Activated B cell treated with CpG ODN at 0.5 μM for 24 hours (primary cell): ENCODE measurements at regions of chr16 and their contacts with region 1.

Region 1: DNA sequence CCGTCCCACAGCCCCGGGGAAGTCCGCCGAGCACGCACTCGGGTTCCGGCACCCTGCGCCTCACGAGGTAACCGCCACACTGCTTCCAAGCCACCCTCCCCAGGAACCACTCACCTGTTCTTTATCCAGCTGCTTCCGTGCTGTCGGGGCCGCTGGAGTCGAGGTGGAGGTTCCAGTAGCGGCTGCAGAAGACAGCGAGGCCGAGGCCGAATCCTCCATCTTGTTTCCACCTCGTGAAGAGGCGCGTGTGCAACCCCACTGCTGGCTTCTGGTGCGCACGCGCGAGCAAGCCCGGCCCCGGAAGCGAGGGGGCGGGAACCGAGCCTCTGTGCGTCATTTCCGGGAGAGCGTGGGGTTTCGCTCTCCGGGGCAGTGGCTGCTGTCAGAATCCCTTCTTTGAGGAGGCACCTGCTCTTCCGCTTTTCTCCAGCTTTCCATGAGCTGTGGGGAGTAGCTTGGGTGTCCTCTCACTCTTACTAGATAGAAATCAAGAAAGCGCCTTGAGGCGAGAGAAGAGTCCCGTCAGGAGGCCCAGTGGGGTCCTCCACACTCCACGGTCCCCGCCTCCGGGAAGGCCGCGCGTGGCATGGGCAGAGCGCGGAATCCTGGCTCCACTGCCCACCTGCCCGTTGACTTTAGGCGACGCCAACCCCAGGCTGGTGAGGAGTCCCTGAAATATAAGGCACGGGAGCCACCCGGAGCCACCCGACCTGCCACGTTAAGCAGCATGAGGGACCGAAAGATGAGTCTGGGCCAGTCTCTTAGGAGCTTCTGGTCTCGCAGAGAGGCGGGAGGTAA is at the start of gene RSL1D1:
- DNase-seq: peak; percentile 98
- ATAC-seq: peak; percentile 78
- H3K4me3 Mint-ChIP-seq: peak within 1 kb of the TSS; percentile 98
- H3K27ac Mint-ChIP-seq: peak within 1 kb of the TSS; percentile 91
- H3K4me1 Mint-ChIP-seq: peaks cover 51% of the 10 kb centered on the region
- H3K27me3 Mint-ChIP-seq: no peaks in the 10 kb centered on the region
- CTCF ChIP-seq: no peak
- total RNA-seq, gene RSL1D1: 224 and 265 TPM in 2 replicates

Region 2: GRCh38 chr16:10752843-10753523 is 1098.5 kb before region 1 on chr16:
- CTCF ChIA-PET with region 1: no interaction called
- POLR2A ChIA-PET with region 1: no interaction called
- intact Hi-C with region 1: no loop called
- DNase-seq: peak; percentile 53
- ATAC-seq: peak; percentile 86
- H3K4me3 Mint-ChIP-seq: peak overlapping the region; percentile 63
- H3K27ac Mint-ChIP-seq: peak overlapping the region; percentile 77
- H3K4me1 Mint-ChIP-seq: peaks cover 61% of the 10 kb centered on the region
- H3K27me3 Mint-ChIP-seq: no peaks in the 10 kb centered on the region
- CTCF ChIP-seq: no peak

Region 3: DNA sequence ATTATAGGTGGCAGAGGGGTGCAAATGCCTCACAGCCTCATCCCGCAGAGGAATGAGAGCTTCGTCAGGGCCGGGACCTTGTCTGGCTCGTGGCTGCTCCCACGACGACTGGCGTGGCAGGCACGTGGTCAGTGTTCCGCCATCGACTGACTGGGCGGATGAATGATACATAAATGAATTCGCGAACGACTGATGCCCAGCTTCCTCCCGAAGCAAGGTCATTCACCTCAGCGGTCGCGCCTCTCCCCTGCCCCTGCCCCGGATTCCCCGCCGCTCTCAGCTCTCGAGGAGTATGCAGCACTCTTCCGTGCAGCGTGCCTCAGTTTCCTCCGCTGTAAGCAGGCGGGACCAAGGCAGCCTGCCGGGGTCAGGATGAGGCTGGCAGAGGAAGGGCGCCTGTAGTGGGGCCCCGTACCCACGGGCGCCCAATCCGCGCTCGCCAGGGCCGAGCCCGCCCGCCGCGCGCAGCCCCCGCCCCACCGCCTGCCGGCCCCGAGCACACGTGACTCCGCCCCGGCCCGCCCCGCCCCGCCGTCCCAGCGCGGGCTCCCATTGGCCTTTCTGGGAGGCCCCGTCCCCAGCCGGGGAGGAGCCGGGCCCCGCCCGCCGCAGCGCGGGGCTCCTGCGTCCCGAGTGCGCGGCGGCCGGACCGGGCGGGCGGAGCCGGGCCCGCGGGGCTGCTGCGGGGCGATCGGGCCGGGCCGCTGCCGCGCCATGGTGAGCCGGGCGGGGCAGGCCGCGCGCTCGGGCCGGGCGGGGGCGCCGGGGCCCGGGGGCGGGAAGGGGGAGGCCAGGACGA is 183.5 kb before region 1 on chr16 and contains the start of gene SNN:
- CTCF ChIA-PET with region 1: no interaction called
- POLR2A ChIA-PET with region 1: no interaction called
- intact Hi-C with region 1: loop called (anchors 5 kb)
- DNase-seq: peak; percentile 86
- ATAC-seq: peak; percentile 79
- H3K4me3 Mint-ChIP-seq: peak within 1 kb of the TSS; percentile 90
- H3K27ac Mint-ChIP-seq: peak within 1 kb of the TSS; percentile 89
- H3K4me1 Mint-ChIP-seq: peaks cover 72% of the 10 kb centered on the region
- H3K27me3 Mint-ChIP-seq: no peaks in the 10 kb centered on the region
- CTCF ChIP-seq: no peak
- total RNA-seq, gene SNN: 31.9 and 32.1 TPM in 2 replicates

Region 4: DNA sequence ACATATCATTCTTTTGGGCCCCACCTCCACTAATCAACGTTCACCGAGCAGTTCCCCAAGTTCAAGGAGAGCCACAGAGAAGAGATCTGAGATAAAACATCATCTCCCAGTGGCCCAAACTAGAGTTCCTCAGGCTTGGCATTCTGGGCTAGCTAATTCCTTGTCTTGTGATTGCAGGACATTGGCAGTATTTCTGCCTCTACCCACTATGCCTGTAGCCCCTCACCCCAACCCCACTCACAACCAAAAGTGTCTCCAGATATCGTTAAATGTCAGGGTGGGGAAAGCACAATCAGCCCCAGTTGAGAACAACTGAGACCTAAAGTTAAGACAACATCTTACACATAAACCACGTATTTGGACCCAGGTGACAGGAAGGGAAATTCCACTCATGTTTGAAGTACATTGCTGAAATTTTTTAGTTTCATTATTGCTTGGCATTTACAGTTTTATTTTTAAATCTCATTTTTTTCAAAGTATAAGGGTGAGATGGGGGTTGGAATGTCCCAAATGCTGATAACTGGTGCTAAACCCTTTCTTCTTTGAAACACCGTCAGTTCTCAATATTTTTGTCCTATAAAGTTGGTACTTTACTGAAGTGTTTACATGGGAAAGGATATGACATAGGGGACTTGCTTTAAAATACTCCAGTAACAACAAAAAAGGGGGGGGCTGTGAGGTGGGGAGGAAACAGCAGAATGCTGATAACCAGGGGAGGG is 68.0 kb before region 1 on chr16:
- CTCF ChIA-PET with region 1: no interaction called
- POLR2A ChIA-PET with region 1: interaction called, 3 read pairs
- intact Hi-C with region 1: loop called (anchors 1 kb)
- DNase-seq: peak; percentile 32
- ATAC-seq: peak; percentile 76
- H3K4me3 Mint-ChIP-seq: peak overlapping the region; percentile 80
- H3K27ac Mint-ChIP-seq: peak overlapping the region; percentile 98
- H3K4me1 Mint-ChIP-seq: peaks cover 73% of the 10 kb centered on the region
- H3K27me3 Mint-ChIP-seq: no peaks in the 10 kb centered on the region
- CTCF ChIP-seq: no peak

Region 5: DNA sequence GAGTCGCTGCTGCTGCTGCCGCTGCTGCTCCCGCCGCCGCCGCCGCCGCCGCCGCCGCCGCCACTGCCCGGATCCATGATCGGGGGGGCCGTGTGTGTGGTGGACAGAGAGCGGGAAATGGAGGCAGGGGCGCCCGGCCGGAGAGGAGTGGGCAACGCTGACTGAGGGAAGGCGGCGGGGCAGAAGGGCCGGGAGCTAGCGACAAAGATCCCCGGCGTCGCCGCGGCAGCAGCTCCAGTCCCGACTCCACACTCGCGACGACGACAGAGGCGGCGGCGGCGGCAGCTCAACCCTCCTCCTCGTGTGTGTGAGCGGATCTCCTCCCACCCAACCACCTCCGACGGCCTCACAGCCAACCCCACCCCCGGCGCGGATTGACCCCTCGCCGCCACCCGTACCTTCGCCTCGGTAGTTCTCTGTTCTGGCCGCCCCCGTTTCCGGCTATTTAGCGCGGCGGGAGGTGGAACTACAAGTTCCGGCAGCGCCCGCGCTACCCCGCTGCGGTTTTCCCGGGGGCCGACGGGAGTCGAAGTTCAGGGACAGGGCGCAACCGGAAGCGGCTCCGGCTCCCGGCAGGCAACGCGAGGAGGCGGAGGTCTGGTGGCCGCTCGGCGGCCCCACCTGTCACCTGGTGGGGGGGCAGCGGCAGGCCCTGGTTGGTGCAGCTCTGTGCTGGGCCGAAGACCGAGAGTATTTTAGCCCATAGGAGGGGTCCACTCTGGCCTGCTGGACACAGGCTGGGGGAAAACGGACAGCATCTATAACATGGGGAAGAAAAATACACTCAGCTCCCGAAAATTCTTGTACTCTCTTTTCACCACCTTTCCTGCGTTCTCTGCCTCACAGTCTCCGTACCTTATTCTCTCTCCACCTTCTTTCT is 64.4 kb after region 1 on chr16 and contains the start of gene GSPT1:
- CTCF ChIA-PET with region 1: no interaction called
- POLR2A ChIA-PET with region 1: interaction called, 7 read pairs
- intact Hi-C with region 1: loop called (anchors 1 kb)
- DNase-seq: peak; percentile 98
- ATAC-seq: peak; percentile 93
- H3K4me3 Mint-ChIP-seq: peak within 1 kb of the TSS; percentile 89
- H3K27ac Mint-ChIP-seq: peak within 1 kb of the TSS; percentile 89
- H3K4me1 Mint-ChIP-seq: peaks cover 31% of the 10 kb centered on the region
- H3K27me3 Mint-ChIP-seq: peaks cover 4% of the 10 kb centered on the region
- CTCF ChIP-seq: no peak
- total RNA-seq, gene GSPT1: 99.9 and 101 TPM in 2 replicates

Region 6: DNA sequence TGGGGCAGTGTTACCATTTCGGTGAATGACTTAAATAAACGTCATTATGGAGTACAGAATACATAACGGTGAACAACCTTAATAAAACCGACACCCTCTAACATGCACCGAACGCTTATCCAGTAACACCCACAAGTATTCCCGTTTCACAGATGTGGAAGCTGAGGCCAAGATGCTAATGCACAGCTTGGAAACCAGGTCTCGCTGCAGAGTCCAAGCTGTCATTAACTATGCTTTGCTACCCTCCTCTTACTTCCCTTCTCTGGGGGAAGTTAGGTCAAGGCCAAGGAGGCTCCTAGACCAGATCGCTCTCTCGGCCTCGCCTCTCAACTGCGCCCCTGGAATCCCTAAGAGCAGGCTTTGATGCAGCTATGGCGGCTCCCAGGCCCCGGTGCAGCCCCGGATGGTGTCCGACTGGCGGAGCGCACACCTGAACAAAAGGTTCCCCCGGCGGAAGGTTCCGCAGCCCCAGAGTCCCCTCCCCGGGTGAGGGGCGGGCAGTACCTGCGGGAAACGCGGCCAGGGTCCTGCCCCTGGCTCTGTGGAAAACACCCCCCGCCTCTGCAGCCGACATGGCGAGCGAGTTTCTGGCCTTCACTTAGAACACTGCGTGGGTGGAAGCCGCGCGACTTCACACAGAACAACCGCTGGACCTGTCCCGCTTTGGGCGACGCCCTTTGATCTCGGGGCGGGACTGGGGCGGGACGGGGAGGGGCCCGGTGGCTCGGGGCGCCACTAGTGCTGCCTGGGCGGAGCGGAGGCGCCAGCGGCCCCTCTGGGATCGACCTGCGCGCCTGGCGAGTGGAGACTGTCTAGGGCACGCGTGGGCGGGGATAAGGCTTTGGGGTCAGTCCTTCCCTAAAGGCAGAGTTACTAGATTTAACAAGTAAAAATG is 952.0 kb after region 1 on chr16 and contains the start of gene CPPED1:
- CTCF ChIA-PET with region 1: no interaction called
- POLR2A ChIA-PET with region 1: no interaction called
- intact Hi-C with region 1: loop called (anchors 5 kb)
- DNase-seq: peak; percentile 94
- ATAC-seq: peak; percentile 89
- H3K4me3 Mint-ChIP-seq: peak within 1 kb of the TSS; percentile 93
- H3K27ac Mint-ChIP-seq: peak within 1 kb of the TSS; percentile 89
- H3K4me1 Mint-ChIP-seq: peaks cover 34% of the 10 kb centered on the region
- H3K27me3 Mint-ChIP-seq: no peaks in the 10 kb centered on the region
- CTCF ChIP-seq: no peak
- total RNA-seq, gene CPPED1: 12.2 and 14.1 TPM in 2 replicates